PC-3 (cell line): ENCODE measurements at regions of chr1 and their contacts with region 1.

Region 1: DNA sequence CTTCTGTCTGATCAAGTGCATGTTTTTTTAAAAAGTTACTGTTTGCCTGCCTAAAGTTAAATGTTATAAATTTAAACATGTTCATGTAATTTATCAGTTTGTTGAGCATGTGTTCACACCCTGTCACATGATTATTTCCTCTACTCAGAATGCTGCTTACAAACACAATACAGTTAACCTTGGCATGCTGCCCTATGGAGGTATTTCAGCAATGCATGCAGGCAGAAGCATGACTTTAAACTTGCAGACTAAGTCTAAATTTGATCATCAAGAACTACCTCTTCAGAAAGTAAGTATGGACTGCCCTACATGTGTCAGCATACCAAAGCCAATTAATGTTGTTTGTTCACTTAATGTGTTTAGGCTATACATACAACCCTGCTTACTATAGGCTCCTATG is 161.6 kb downstream of the LRRC40 start:
- DNase-seq: peak; percentile 60
- ATAC-seq: peak; percentile 33
- H3K4me3 ChIP-seq: no peak overlapping the region
- H3K27ac ChIP-seq: no peak overlapping the region
- H3K4me1 ChIP-seq: peaks cover 21% of the 10 kb centered on the region
- H3K27me3 ChIP-seq: no peaks in the 10 kb centered on the region
- CTCF ChIP-seq: no peak

Region 2: DNA sequence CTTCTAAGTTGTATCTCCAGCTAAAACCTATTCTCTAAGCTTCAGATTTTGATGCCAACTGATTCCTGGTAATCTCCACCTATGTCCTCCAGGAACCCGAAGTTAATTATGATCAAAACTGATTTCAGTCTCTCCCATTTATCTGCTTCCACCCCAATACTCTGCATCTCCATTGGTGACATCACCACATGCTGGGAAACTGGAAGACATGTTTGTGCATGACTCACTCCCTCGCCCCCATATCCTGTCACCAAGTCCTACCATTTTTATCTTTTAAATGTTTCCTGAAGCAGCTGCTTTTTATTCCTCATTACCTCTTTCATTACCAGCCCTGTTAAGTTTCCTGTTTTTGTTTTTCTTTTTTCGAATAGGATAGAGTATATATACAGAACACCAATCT is 66.9 kb before region 1 on chr1:
- CTCF ChIA-PET with region 1: no interaction called
- POLR2A ChIA-PET with region 1: no interaction called
- intact Hi-C with region 1: no loop called
- DNase-seq: no peak
- ATAC-seq: no peak
- H3K4me3 ChIP-seq: no peak overlapping the region
- H3K27ac ChIP-seq: no peak overlapping the region
- H3K4me1 ChIP-seq: no peaks in the 10 kb centered on the region
- H3K27me3 ChIP-seq: peaks cover 7% of the 10 kb centered on the region
- CTCF ChIP-seq: no peak

Region 3: GRCh38 chr1:70085451-70085850 is 41.6 kb after region 1 on chr1:
- CTCF ChIA-PET with region 1: no interaction called
- POLR2A ChIA-PET with region 1: no interaction called
- intact Hi-C with region 1: loop called (anchors 1 kb)
- DNase-seq: peak; percentile 51
- ATAC-seq: peak; percentile 70
- H3K4me3 ChIP-seq: no peak overlapping the region
- H3K27ac ChIP-seq: peak overlapping the region; percentile 2; the same call in 1 of the 2 replicates
- H3K4me1 ChIP-seq: peaks cover 21% of the 10 kb centered on the region
- H3K27me3 ChIP-seq: no peaks in the 10 kb centered on the region
- CTCF ChIP-seq: no peak

Region 4: GRCh38 chr1:70090875-70091274 is 47.1 kb after region 1 on chr1:
- CTCF ChIA-PET with region 1: no interaction called
- POLR2A ChIA-PET with region 1: no interaction called
- intact Hi-C with region 1: loop called (anchors 1 kb)
- DNase-seq: peak; percentile 83
- ATAC-seq: peak; percentile 97
- H3K4me3 ChIP-seq: no peak overlapping the region
- H3K27ac ChIP-seq: no peak overlapping the region
- H3K4me1 ChIP-seq: peaks cover 18% of the 10 kb centered on the region
- H3K27me3 ChIP-seq: no peaks in the 10 kb centered on the region
- CTCF ChIP-seq: no peak